CD8-positive, alpha-beta T cell (primary cell): ENCODE measurements at regions of chr6 and their contacts with region 1.

Region 1: DNA sequence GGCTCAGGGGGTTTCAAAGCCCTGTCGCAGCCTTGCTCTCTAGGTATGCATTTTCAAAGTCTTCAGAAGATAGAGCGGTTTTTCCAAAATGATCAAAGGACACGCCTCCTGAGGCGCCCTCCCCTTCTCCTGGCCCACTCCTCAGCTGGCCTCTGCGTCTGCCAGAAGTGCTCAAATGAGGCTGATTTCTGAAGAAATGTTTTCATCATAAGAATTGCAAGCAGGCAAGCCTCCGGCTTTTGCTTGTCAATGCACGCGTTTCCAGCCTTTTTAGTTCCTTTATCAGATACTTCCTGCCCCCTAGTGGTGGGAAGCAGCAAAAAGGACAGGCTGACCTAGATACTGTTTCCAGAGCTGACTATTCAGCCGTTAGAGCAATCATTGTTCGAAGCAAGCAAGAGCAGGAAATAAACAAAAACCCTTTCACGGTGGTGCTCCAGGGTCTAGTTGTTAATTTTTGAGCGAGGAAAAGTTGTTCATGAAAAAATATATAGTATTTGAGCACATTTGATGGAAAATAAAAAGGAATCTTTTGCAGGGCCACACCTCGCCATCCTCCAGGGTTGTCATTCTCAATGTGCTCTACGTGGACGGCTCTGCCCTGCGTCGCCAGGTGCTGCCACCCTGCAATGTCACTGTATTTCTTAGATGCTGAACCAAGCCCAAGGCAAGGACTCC is 93.4 kb upstream of the ASF1A start:
- DNase-seq: peak; percentile 61 to 90 (median 85)
- ATAC-seq: peak; percentile 85
- H3K4me3 ChIP-seq: peak overlapping the region in 1 of 2 experiments; percentile 28
- H3K4me3 Mint-ChIP-seq: peak overlapping the region; percentile 70
- H3K27ac ChIP-seq: peak overlapping the region in 1 of 2 experiments; percentile 38
- H3K27ac Mint-ChIP-seq: peak overlapping the region; percentile 94
- H3K4me1 ChIP-seq: peaks cover 23% of the 10 kb centered on the region
- H3K4me1 Mint-ChIP-seq: peaks cover 42% of the 10 kb centered on the region
- H3K27me3 ChIP-seq: no peaks in the 10 kb centered on the region
- H3K27me3 Mint-ChIP-seq: no peaks in the 10 kb centered on the region
- CTCF ChIP-seq: peak; percentile 91

Region 2: DNA sequence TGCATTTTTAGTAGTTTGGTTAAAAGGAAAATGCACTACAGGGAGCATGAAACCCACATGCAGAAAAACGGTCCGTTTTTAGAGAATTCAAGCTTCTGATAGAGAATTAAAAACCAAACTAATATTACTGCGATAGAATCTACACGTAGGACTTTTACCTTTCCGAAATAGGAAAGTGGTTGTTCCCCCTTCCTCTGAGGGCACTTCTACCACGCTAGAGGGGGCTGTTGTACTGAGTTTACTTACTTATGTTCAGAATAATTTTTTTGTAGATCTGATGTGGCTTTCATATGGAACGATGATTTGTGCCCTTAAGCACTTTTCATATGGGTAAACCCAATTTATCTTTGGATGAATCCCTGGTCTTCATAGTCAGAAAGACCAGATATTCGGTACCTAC is 516.8 kb before region 1 on chr6:
- CTCF ChIA-PET with region 1: interaction called, 5 read pairs
- POLR2A ChIA-PET with region 1: no interaction called
- intact Hi-C with region 1: loop called in 1 of 2 experiments (anchors 10 kb)
- DNase-seq: peak in 8 of 9 experiments; percentile 14 to 74 (median 52)
- ATAC-seq: peak; percentile 61
- H3K4me3 ChIP-seq: no peak overlapping the region
- H3K4me3 Mint-ChIP-seq: no peak overlapping the region
- H3K27ac ChIP-seq: no peak overlapping the region
- H3K27ac Mint-ChIP-seq: no peak overlapping the region
- H3K4me1 ChIP-seq: no peaks in the 10 kb centered on the region
- H3K4me1 Mint-ChIP-seq: peaks cover 2% of the 10 kb centered on the region
- H3K27me3 ChIP-seq: no peaks in the 10 kb centered on the region
- H3K27me3 Mint-ChIP-seq: peaks cover 11% of the 10 kb centered on the region
- CTCF ChIP-seq: peak; percentile 61

Region 3: DNA sequence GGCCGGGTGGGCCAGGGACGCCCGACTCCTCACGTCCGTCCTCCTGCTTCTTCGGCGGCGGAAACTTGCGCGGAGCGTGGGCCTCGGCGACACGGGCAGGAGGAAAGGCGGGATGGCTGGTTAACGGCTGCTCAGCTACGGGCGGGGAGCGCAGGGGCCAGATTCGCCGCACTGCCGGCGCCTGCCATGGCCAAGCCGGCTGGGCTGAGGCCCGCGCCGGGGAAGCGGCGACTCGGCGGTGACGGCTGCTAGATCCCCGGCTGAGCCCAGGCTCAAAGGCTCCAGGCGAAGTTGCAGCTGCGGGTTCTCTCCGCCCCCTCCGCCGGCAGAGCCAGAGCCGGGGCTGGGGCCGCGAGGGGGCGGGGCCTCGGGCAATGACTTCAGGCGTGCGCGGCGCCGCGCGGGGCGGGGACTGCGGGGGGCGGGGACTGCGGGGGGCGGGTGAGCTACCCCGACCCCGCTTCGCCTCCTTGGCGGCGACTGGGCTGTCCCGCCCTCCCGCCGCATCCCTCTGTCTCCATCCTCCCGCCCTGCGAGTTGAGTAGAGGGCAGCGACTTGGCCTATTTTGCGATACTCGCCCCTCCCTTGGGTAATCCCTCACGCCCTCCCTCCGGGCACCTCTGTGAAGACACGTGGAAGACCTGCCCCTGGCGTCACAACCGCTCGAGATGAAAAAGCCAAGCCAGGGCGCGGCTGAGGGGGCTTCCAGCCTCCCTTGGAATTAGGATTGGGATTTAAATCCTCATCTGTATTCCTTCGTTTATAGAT is 149.1 kb before region 1 on chr6 and contains the start of gene CEP85L:
- CTCF ChIA-PET with region 1: interaction called, 4 read pairs
- POLR2A ChIA-PET with region 1: interaction called, 3 read pairs
- intact Hi-C with region 1: loop called in 1 of 2 experiments (anchors 5 kb)
- DNase-seq: peak; percentile 80 to 95 (median 91)
- ATAC-seq: peak; percentile 91
- H3K4me3 ChIP-seq: peak within 1 kb of the TSS; percentile 72 to 86
- H3K4me3 Mint-ChIP-seq: peak within 1 kb of the TSS; percentile 95
- H3K27ac ChIP-seq: peak within 1 kb of the TSS; percentile 79 to 81
- H3K27ac Mint-ChIP-seq: peak within 1 kb of the TSS; percentile 95
- H3K4me1 ChIP-seq: peaks cover 43% of the 10 kb centered on the region
- H3K4me1 Mint-ChIP-seq: peaks cover 51% of the 10 kb centered on the region
- H3K27me3 ChIP-seq: no peaks in the 10 kb centered on the region
- H3K27me3 Mint-ChIP-seq: no peaks in the 10 kb centered on the region
- CTCF ChIP-seq: no peak
- total RNA-seq, gene CEP85L: 86.2 to 89.0 TPM

Region 4: GRCh38 chr6:118677193-118677592 is 123.3 kb before region 1 on chr6:
- CTCF ChIA-PET with region 1: no interaction called
- POLR2A ChIA-PET with region 1: no interaction called
- intact Hi-C with region 1: no loop called
- DNase-seq: no peak
- ATAC-seq: no peak
- H3K4me3 ChIP-seq: no peak overlapping the region
- H3K4me3 Mint-ChIP-seq: no peak overlapping the region
- H3K27ac ChIP-seq: no peak overlapping the region
- H3K27ac Mint-ChIP-seq: no peak overlapping the region
- H3K4me1 ChIP-seq: peaks cover 32% of the 10 kb centered on the region
- H3K4me1 Mint-ChIP-seq: peaks cover 75% of the 10 kb centered on the region
- H3K27me3 ChIP-seq: no peaks in the 10 kb centered on the region
- H3K27me3 Mint-ChIP-seq: no peaks in the 10 kb centered on the region
- CTCF ChIP-seq: no peak

Region 5: GRCh38 chr6:118735320-118735719 is 65.2 kb before region 1 on chr6:
- CTCF ChIA-PET with region 1: interaction called, 4 read pairs
- POLR2A ChIA-PET with region 1: no interaction called
- intact Hi-C with region 1: loop called (anchors 5 to 10 kb)
- DNase-seq: peak in 2 of 9 experiments; percentile 41 to 65
- ATAC-seq: peak; percentile 55
- H3K4me3 ChIP-seq: no peak overlapping the region
- H3K4me3 Mint-ChIP-seq: no peak overlapping the region
- H3K27ac ChIP-seq: no peak overlapping the region
- H3K27ac Mint-ChIP-seq: no peak overlapping the region
- H3K4me1 ChIP-seq: peaks cover 14% of the 10 kb centered on the region
- H3K4me1 Mint-ChIP-seq: peaks cover 35% of the 10 kb centered on the region
- H3K27me3 ChIP-seq: no peaks in the 10 kb centered on the region
- H3K27me3 Mint-ChIP-seq: no peaks in the 10 kb centered on the region
- CTCF ChIP-seq: no peak

Region 6: DNA sequence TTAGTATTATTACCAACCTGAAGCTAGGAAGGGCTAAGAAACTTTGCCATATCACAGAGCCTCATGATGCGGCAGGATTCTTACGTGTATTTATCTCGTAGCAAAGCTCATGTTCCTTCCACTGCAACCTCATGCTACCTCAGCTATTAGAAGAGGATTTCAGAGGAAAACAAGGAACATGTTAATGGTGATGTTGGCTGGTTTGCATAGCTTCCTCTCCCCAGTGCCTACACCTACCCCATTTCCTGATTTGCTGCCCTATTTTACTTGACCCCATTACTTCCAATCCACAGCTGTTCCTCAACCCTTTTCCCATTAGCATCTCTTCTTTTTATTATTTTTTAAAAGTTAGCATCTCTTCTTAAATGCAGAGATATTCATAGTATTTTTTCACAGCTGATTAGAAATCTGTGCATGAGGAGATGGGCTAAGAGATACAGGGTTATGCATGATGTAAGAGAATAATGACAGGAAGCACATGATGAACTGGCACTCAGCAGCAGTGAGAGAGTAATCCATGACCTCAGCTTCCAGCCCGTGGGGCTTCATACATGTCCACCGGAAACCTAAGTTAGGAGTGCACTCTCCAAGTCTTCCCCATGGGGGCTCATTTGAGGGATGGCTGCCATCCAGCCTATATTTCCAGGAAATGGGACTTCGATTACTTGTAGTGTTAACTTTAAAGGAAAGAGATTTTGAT is 12.7 kb before region 1 on chr6:
- CTCF ChIA-PET with region 1: interaction called, 18 read pairs
- POLR2A ChIA-PET with region 1: interaction called, 6 read pairs
- intact Hi-C with region 1: no loop called
- DNase-seq: peak in 2 of 9 experiments; percentile 24 to 37
- ATAC-seq: peak; percentile 85
- H3K4me3 ChIP-seq: no peak overlapping the region
- H3K4me3 Mint-ChIP-seq: no peak overlapping the region
- H3K27ac ChIP-seq: peak overlapping the region in 1 of 2 experiments; percentile 37
- H3K27ac Mint-ChIP-seq: peak overlapping the region; percentile 69
- H3K4me1 ChIP-seq: peaks cover 13% of the 10 kb centered on the region
- H3K4me1 Mint-ChIP-seq: peaks cover 30% of the 10 kb centered on the region
- H3K27me3 ChIP-seq: no peaks in the 10 kb centered on the region
- H3K27me3 Mint-ChIP-seq: no peaks in the 10 kb centered on the region
- CTCF ChIP-seq: no peak